ENCODE measurements at regions of chr11 and their contacts with region 1.

Region 1: DNA sequence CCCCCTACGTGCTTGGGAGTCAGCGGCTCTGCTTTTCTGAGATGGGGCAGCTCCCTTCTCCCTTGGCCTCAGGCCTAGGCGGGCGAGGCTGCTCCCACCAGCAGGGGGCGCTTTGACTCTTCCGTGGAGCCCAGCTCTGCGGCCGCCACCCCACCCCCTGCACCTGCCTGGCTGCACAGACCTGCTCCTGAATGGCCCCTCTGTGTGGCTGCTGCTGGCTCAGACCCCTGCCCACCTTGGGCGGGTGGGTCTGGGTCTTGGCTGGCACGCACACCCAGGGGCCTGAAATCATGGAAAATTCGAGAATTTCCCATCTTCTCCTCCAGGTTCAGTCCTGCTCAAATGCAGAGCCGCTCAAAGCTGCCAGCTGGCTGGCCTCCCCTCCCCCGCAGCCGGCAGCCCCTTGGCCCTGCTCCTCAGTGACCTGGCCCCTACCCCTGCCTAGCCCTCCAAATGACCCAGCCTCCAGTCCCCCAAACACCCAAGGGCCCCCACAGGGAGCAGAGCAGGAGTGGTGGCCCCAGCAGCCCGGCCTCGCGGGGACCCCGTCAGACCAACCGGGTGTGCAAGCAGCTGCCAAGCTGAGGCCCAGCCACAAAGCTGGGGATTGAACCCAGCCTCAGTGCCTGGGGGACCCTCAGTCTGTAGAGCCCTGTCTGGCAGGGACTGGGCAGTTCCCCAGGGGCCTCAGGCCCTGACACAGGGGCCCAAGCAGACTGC is 9.0 kb downstream of the PRR33 start:
- DNase-seq: peak; percentile 60
- H3K4me3 ChIP-seq: no peak overlapping the region
- H3K27ac ChIP-seq: no peak overlapping the region
- H3K4me1 ChIP-seq: no peaks in the 10 kb centered on the region
- H3K27me3 ChIP-seq: no peaks in the 10 kb centered on the region
- CTCF ChIP-seq: peak; percentile 91 to 98
- POLR2A ChIP-seq: no peak

Region 2: GRCh38 chr11:429931-430456 is 1452.7 kb before region 1 on chr11:
- CTCF ChIA-PET with region 1: no interaction called
- POLR2A ChIA-PET with region 1: no interaction called
- dilution Hi-C with region 1: no loop called
- intact Hi-C with region 1: no loop called
- DNase-seq: no peak
- H3K4me3 ChIP-seq: no peak overlapping the region
- H3K27ac ChIP-seq: no peak overlapping the region
- H3K4me1 ChIP-seq: no peaks in the 10 kb centered on the region
- H3K27me3 ChIP-seq: peaks cover 0 to 5% of the 10 kb centered on the region in 2 experiments
- CTCF ChIP-seq: no peak
- POLR2A ChIP-seq: no peak

Region 3: GRCh38 chr11:1600626-1601025 is 282.1 kb before region 1 on chr11:
- CTCF ChIA-PET with region 1: no interaction called
- POLR2A ChIA-PET with region 1: no interaction called
- dilution Hi-C with region 1: no loop called
- intact Hi-C with region 1: no loop called
- DNase-seq: no peak
- H3K4me3 ChIP-seq: no peak overlapping the region
- H3K27ac ChIP-seq: no peak overlapping the region
- H3K4me1 ChIP-seq: no peaks in the 10 kb centered on the region
- H3K27me3 ChIP-seq: peaks cover 0 to 5% of the 10 kb centered on the region in 2 experiments
- CTCF ChIP-seq: no peak
- POLR2A ChIP-seq: no peak

Region 4: DNA sequence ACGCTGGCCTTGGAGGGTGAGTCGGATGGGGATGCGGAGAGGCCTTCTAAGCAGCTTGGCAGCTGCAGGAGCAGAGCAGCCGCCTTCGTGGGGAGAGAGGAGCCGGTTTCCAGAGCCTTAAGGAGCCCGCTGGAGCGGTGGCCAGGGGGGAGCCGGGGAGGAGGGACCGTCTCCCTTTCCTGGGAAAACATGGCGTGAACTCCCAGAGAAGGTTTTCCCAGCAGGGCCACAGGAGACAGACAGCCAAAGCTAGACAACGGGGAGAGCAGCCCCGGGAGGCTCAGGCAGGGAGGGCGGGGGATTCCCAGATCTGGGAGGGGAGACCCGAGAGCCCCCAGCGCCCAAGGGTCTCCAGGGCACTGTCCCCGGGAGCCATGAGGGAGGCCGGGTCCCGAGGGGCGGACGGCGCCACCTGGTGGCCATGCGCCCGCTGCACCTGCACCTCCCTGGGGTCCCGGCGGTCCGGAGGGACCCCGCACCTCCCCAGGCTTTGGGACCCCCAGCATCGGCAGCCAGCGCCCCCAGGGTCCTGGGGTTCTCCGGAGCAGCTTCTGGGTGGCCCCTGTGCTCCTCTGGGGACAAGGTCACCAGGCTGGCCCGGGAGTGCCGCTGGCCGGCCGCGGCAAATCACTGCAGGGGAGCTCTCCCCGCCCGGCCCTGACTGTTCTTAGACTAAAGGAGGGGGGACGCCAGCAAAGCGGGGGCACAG is 50.3 kb before region 1 on chr11:
- CTCF ChIA-PET with region 1: interaction called, 24 read pairs
- POLR2A ChIA-PET with region 1: no interaction called
- dilution Hi-C with region 1: no loop called
- intact Hi-C with region 1: loop called (anchors 1 kb)
- DNase-seq: no peak
- H3K4me3 ChIP-seq: no peak overlapping the region
- H3K27ac ChIP-seq: no peak overlapping the region
- H3K4me1 ChIP-seq: peaks cover 2% of the 10 kb centered on the region
- H3K27me3 ChIP-seq: no peaks in the 10 kb centered on the region
- CTCF ChIP-seq: peak; percentile 87 to 97
- POLR2A ChIP-seq: no peak

Region 5: DNA sequence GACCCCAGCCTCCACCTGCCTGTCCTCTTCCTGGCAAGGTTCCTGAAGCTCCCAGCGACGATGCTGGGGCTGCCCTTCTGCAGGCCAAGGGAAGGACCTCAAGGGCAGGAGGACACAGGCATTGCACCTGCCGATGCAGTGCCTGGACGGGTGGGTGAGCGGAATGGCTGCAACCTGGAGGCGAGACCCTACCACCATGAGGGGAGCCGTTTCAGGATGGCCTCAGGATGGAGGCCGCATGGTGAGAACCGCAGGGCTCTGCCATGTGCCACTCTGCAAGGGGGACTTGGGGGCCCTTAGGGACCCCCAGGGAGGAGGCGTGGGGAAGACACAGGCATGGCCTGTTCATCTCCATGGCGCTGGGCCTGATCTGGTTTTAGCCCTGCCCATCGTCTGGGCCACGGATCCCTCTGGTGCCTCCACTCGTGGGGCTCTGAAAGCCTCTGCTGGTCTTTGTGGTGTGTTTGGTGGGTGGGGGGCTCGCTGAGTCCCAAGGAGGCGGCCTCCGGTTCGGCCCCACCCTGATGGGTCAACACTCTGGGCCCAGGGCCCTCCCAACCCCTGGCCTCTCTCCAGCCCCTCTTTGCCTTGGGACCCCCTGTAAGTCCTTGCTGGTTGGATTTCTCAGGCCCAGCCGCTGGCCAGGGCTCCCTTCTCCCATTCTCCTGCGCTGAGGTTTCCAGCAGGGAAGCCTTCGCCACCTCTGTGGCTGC is 31.1 kb before region 1 on chr11:
- CTCF ChIA-PET with region 1: interaction called, 16 read pairs
- POLR2A ChIA-PET with region 1: no interaction called
- dilution Hi-C with region 1: no loop called
- intact Hi-C with region 1: no loop called
- DNase-seq: no peak
- H3K4me3 ChIP-seq: no peak overlapping the region
- H3K27ac ChIP-seq: no peak overlapping the region
- H3K4me1 ChIP-seq: no peaks in the 10 kb centered on the region
- H3K27me3 ChIP-seq: no peaks in the 10 kb centered on the region
- CTCF ChIP-seq: no peak
- POLR2A ChIP-seq: no peak

Region 6: GRCh38 chr11:1896923-1897322 is 14.2 kb after region 1 on chr11:
- CTCF ChIA-PET with region 1: interaction called, 21 read pairs
- POLR2A ChIA-PET with region 1: no interaction called
- dilution Hi-C with region 1: no loop called
- intact Hi-C with region 1: no loop called
- DNase-seq: no peak
- H3K4me3 ChIP-seq: no peak overlapping the region
- H3K27ac ChIP-seq: no peak overlapping the region
- H3K4me1 ChIP-seq: no peaks in the 10 kb centered on the region
- H3K27me3 ChIP-seq: peaks cover 17 to 23% of the 10 kb centered on the region in 2 experiments
- CTCF ChIP-seq: no peak
- POLR2A ChIP-seq: no peak

Region 7: GRCh38 chr11:1943977-1944376 is 61.3 kb after region 1 on chr11:
- CTCF ChIA-PET with region 1: interaction called, 102 read pairs
- POLR2A ChIA-PET with region 1: no interaction called
- dilution Hi-C with region 1: no loop called
- intact Hi-C with region 1: no loop called
- DNase-seq: peak; percentile 24
- H3K4me3 ChIP-seq: no peak overlapping the region
- H3K27ac ChIP-seq: no peak overlapping the region
- H3K4me1 ChIP-seq: no peaks in the 10 kb centered on the region
- H3K27me3 ChIP-seq: no peaks in the 10 kb centered on the region
- CTCF ChIP-seq: no peak
- POLR2A ChIP-seq: no peak

Region 8: GRCh38 chr11:2002807-2003206 is 120.1 kb after region 1 on chr11:
- CTCF ChIA-PET with region 1: interaction called, 102 read pairs
- POLR2A ChIA-PET with region 1: no interaction called
- dilution Hi-C with region 1: no loop called
- intact Hi-C with region 1: no loop called
- DNase-seq: no peak
- H3K4me3 ChIP-seq: no peak overlapping the region
- H3K27ac ChIP-seq: no peak overlapping the region
- H3K4me1 ChIP-seq: no peaks in the 10 kb centered on the region
- H3K27me3 ChIP-seq: no peaks in the 10 kb centered on the region
- CTCF ChIP-seq: no peak
- POLR2A ChIP-seq: no peak

Region 9: DNA sequence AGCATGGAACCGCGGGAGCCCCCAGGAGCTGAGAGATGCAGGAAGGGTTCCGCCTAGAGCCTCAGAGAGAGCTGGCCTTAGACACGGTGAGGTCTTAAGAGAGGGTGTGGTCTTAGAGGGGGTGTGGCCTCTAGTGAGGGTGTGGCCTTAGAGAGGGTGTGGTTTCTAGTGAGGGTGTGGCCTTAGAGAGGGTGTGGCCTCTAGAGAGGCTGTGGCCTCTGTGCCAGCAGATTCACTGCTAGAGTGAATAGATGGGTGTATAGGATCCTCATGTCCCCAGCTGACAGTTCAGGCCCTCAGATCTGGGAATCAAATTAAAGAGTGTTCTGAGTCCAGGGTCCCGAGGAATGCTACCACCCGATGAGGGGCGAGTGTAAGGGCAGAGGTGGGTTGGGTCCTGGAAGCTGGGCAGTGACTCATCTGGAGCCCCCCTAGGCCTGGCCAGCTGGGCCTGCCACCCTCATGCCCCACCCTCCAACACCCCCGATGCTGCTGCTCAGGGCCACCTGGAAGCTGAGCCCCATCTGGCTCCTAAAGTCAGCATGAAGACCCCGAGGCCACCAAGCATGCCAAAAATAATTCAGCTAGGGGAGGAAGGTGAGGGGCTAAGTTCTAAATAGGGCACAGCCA is 207.0 kb after region 1 on chr11:
- CTCF ChIA-PET with region 1: no interaction called
- POLR2A ChIA-PET with region 1: no interaction called
- dilution Hi-C with region 1: no loop called
- intact Hi-C with region 1: no loop called
- DNase-seq: peak; percentile 43
- H3K4me3 ChIP-seq: no peak overlapping the region
- H3K27ac ChIP-seq: no peak overlapping the region
- H3K4me1 ChIP-seq: no peaks in the 10 kb centered on the region
- H3K27me3 ChIP-seq: no peaks in the 10 kb centered on the region
- CTCF ChIP-seq: no peak
- POLR2A ChIP-seq: no peak